ENCODE measurements at regions of chr9 and their contacts with region 1.

Region 1: DNA sequence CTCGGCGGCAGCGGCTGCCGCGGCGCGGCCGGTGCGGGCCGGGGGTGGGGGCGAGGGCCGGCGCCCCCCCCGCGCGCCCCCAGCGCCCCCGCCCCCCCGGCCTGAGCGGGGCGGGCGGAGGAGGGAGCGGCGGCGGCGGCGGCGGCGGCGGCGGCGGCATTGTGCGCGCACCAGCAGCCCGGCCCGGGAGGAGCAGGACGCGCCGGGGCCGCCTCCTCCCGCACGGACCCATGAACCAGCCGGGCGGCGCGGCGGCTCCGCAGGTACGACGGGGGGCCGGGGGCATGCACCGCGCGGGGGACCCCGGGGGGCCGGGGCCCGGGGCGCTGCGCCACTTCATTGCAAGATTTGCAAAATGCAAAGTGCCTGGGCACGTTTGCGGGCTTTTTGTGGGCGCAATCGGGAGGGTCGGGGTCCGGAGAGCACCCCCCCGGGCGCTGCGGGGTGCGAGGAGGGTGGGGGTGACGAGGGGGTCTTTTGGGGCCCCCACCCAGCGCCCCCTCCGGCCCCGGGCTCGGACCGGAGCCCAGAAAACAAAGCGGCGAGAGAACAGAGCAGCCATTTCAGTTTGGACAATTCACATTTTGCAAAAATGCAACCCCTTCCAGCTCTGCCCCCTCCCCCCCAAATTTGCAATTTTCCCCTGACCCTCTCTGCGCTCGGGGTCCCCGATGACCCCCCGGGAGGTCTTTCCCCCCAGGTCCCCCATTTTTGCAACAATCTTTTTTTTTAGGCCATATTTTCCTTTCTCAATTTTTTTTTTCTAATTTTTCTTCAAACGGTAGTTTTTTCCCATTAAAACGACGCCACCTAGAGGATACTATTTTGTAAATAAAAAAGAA is at the start of gene ZNF618:
- DNase-seq: peak; percentile 30 to 61
- ATAC-seq: peak; percentile 53 to 80 (median 72)
- H3K4me3 ChIP-seq: peak within 1 kb of the TSS; percentile 93
- H3K27ac ChIP-seq: peak within 1 kb of the TSS; percentile 63
- H3K4me1 ChIP-seq: peaks cover 5% of the 10 kb centered on the region
- H3K27me3 ChIP-seq: no peaks in the 10 kb centered on the region
- CTCF ChIP-seq: no peak
- total RNA-seq, gene ZNF618: 1.2 to 2.7 (median 1.3) TPM

Region 2: DNA sequence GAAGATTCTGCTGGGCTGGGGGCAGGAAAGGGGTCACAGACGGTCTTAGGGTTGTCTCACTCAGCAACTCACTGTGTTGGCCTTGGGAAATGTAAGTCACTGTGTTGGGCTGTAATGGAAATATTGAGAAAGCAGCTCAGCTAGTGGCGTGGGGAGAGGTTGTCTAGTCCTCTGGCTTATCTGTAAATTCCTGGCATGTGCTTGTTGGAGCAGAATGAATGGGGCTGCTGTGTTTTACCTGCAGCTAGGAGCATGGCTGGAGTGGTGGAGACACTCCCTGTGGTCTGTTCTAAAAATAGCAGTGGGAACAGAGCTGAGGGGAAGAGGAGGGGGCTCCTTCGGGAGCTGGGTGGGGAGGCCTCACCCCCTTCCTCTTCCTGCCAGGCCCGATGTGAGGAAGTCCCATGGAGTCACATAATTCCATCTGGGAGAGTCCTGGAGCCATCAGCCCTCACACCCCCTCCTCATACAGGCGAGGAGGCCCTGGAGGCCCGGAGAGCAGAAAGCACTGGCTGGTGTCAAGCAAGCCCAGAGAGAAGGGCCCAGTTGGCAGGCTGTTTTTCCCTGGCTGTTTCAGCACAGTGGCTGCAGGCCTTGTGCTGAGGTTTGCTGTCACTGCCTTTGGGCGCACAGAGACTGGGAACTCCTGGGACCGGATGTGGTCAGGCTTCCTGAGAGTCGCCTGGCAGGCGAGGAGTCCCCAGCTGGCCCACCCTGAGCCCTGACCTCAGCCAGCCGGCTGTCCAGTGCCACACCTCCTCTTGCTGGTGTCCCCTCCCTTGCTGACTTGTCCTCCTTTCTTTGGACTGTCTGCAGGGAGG is 327.9 kb before region 1 on chr9:
- intact Hi-C with region 1: no loop called
- DNase-seq: peak; percentile 78 to 84
- ATAC-seq: peak; percentile 94 to 98 (median 98)
- H3K4me3 ChIP-seq: peak overlapping the region; percentile 31
- H3K27ac ChIP-seq: peak overlapping the region; percentile 87
- H3K4me1 ChIP-seq: peaks cover 31% of the 10 kb centered on the region
- H3K27me3 ChIP-seq: no peaks in the 10 kb centered on the region
- CTCF ChIP-seq: no peak

Region 3: DNA sequence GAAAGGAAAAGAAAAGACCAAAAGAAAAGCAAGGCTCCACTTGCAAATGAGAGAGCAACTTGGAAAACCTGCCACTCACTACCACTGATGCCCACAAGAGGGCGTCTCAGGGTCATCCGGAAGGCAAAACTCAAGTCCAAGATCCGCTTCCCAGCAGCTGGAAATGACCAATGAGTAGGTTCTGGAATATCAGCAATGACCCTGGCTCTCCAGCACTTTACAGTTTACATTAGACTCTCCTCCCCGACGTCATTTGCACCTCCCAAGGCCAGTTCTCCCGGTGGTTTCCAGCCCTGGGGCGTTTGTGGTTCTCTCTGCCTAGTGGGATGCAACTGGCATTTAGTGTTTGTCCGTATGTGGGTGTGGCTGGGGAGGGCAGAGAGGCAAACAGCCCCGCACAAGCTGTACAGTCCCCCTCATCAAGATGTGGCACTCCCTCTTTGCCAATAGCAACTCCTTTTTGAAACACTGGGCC is 194.0 kb before region 1 on chr9:
- intact Hi-C with region 1: loop called in 1 of 2 experiments (anchors 10 kb)
- DNase-seq: peak; percentile 64 to 70
- ATAC-seq: peak; percentile 49 to 69 (median 66)
- H3K4me3 ChIP-seq: no peak overlapping the region
- H3K27ac ChIP-seq: no peak overlapping the region
- H3K4me1 ChIP-seq: no peaks in the 10 kb centered on the region
- H3K27me3 ChIP-seq: peaks cover 0 to 11% (median under 1%) of the 10 kb centered on the region in 3 donors
- CTCF ChIP-seq: peak; percentile 87

Region 4: DNA sequence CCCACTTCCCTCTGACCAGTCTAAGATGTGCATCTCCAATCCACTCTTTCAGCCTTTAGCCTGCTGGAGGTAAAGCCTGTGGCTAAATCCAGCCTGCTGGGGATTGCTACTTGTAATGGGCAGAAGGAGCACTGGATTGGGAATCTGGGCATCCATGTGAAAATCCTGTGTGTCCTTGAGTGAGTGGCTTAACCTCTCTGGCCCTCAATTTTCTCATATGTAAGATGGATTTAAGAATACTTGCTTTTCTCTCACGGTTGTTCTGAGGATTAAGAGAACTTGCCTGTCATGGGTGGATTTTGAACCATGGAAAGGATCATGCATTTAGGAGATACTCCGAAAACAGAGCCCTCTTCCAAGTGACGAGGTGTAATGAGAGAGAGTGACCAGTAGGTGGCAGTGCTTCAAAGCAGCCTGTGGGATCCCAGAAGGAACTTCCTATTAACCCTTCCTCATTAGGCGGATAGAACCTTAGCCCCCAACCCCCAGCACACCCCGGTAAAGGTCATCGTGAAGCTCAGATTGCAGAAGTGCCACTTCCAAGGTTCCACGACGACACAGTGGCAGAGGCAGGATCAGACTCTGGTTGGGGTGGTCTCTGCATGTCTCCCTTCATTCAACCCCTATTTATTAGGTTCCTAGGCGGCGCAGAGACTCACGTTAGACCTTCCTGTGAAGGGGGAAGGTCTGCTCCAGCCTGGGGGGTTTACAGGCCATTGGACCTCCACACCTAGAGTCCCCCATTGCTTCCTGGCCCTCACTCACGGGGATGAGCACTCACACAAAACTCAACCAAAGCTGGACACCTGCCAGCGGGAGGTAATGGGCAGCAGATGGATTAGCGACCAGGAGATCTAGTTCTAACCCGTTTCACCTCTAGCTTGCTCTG is 69.0 kb before region 1 on chr9:
- intact Hi-C with region 1: loop called in 1 of 2 experiments (anchors 5 kb)
- DNase-seq: peak in 1 of 2 donors; percentile 30
- ATAC-seq: peak; percentile 78 to 91 (median 82)
- H3K4me3 ChIP-seq: peak overlapping the region; percentile 51
- H3K27ac ChIP-seq: no peak overlapping the region
- H3K4me1 ChIP-seq: no peaks in the 10 kb centered on the region
- H3K27me3 ChIP-seq: no peaks in the 10 kb centered on the region
- CTCF ChIP-seq: peak; percentile 93

Region 5: DNA sequence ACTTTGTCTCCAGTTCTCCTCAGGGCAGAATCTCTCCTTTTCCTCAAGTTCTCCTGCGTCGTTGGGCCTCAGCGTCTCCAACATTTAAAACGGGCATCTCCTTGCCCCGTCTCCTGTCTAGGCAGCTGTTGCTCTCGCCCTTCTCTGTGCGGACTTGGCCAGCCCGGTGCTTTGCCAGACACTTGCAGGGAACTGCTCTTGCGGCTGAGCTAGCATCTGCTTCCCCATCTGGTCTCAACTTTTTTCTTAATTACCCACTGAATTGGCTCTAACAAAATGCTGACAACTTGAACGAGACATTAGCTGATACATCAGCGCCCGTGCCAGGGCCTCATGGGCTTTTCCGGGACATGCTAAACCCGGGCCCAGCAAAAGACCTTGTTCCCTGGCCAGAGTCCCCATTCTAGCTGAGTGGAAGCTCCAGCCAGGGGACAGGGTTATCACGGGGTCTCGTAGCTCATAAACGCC is 24.9 kb after region 1 on chr9:
- intact Hi-C with region 1: no loop called
- DNase-seq: no peak
- ATAC-seq: peak in 3 of 4 donors; percentile 46 to 74 (median 60)
- H3K4me3 ChIP-seq: no peak overlapping the region
- H3K27ac ChIP-seq: no peak overlapping the region
- H3K4me1 ChIP-seq: peaks cover 3% of the 10 kb centered on the region
- H3K27me3 ChIP-seq: no peaks in the 10 kb centered on the region
- CTCF ChIP-seq: no peak

Region 6: DNA sequence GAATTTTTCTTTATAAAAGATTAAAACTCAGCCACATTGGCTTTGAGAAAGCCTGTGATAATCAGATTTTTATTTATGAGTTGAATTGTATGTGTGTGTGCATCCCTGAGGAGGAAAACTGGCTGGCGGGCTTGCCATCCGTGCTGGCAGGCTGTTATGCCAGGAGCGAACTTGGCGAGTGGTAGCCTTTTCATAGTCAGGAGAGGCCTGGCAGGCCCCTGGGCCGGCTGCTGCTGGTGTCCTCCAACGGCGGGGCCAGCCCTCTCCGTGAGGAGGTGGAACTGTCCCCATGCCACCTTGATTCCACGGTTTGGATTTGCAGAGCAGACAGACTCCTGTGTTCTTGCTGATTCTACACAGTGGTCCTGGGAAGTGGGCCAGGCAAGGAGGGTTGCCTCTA is 43.0 kb after region 1 on chr9:
- intact Hi-C with region 1: loop called in 1 of 2 experiments (anchors 5 kb)
- DNase-seq: peak; percentile 27 to 70
- ATAC-seq: peak; percentile 81 to 90 (median 86)
- H3K4me3 ChIP-seq: peak overlapping the region; percentile 8
- H3K27ac ChIP-seq: peak overlapping the region; percentile 56
- H3K4me1 ChIP-seq: peaks cover 22% of the 10 kb centered on the region
- H3K27me3 ChIP-seq: no peaks in the 10 kb centered on the region
- CTCF ChIP-seq: no peak